ENCODE measurements at regions of chr14 and their contacts with region 1.

Region 1: DNA sequence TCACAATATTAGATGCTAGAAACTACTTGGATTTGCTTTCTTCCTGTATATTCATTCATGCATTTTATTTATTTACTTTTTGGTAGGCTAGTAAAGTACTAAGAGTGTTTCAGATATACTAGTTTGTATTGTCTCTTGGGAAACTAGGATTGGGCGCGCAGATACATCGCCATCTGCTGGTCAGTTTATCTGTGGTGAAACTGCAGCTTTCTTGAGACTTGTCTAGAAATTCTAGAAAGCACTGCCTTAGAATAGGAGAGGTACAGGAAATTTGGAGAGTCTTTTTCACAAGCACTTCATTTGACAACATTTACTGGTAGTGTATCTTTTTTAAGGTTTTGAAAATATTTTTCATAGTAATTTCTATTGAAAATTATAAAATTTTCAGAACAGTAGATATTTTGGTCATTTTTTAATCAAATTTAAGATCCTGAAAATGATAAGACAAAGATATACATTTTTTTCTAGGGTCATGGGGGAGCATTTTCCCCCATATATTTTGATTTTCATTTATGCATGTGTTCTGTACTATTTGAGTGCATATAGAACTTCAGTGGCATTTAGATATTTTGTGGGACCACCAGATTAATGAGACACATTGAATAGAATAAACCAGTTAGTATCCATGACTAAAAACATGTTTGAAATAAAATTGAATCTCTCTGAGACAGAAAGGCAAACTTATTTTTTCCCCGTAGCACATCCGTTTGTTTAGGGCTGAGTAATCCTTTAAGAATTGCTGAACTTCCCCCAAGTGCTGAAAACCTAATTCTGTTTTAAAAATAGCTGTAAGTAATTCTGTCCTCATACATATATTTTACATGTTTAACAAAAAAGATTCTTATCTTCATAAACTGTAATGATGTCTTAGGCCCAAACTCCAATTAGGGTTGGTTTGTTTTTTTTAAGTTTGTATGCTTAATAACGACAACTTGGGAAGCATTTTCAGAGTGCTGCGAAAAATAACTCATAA is 44.5 kb downstream of the SLC38A6 start:
- DNase-seq: peak; percentile 31 to 76
- ATAC-seq: peak; percentile 81 to 91
- H3K4me3 ChIP-seq: no peak overlapping the region
- H3K27ac ChIP-seq: peak overlapping the region; percentile 18 to 48; a peak in 3 of 6 replicates
- H3K4me1 ChIP-seq: peaks cover 20% of the 10 kb centered on the region
- CTCF ChIP-seq: peak; percentile 92
- EP300 ChIP-seq: no peak
- POLR2A ChIP-seq: no peak
- RAD21 ChIP-seq: peak; percentile 85 to 87

Region 2: GRCh38 chr14:60482743-60483142 is 542.8 kb before region 1 on chr14:
- CTCF ChIA-PET with region 1: no interaction called
- POLR2A ChIA-PET with region 1: no interaction called
- DNase-seq: no peak
- ATAC-seq: no peak
- H3K4me3 ChIP-seq: no peak overlapping the region
- H3K27ac ChIP-seq: no peak overlapping the region
- H3K4me1 ChIP-seq: no peaks in the 10 kb centered on the region
- CTCF ChIP-seq: no peak
- EP300 ChIP-seq: no peak
- POLR2A ChIP-seq: no peak
- RAD21 ChIP-seq: no peak

Region 3: DNA sequence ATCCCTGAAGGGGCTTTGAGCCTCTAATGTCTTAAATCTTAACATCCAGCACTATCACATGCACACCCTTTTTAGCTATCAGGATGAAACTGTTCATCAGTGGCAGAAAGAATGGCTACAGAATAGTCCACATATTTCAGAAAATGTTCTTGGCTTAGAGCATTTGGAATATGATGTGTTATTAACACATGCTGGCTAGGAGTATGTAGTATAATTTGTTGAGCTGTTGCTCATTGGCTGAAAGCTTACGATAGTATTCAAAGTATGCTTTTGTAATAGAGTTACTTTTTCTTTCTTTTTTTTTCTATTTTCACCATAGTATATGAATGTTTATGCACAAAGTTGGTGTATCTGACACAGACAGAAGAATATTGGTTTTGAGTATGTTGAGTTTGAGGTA is 235.9 kb before region 1 on chr14:
- CTCF ChIA-PET with region 1: no interaction called
- POLR2A ChIA-PET with region 1: interaction called, 11 read pairs
- DNase-seq: no peak
- ATAC-seq: no peak
- H3K4me3 ChIP-seq: no peak overlapping the region
- H3K27ac ChIP-seq: no peak overlapping the region
- H3K4me1 ChIP-seq: peaks cover 17% of the 10 kb centered on the region
- CTCF ChIP-seq: no peak
- EP300 ChIP-seq: no peak
- POLR2A ChIP-seq: no peak
- RAD21 ChIP-seq: no peak

Measured in A549 (cell line).